Activated T-helper 2 cell treated with anti-CD3 and anti-CD28 coated beads, Interferon-gamma antibody, Interleukin-2, Interleukin-4, amounts not matched to agents 10 μg/mL and 5 μg/mL and 100 μg/mL, durations not matched to agents 14 hours and 24 hours and 36 hours (primary cell): ENCODE measurements at regions of chr11 and their contacts with region 1.

Region 1: DNA sequence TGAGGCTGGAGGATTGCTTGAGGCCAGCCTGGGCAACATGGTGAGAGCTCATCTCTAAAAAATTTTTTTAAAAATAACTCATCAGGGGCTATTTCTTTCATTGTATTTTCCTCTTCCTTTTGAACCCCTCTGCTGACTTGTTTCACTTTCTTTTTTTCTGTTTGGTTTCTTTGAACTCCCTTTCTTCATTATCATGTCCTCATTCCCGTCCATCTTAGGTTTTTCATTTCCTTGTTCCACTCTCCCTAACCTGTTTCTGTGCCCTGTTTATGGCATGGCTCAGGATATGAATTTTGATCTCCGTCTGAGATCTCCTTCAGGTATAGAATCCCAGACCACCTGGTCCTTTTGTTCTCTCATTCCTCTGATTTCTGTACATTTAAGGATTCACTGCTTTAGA is 12.5 kb downstream of the MARK2 start:
- DNase-seq: no peak
- H3K4me3 Mint-ChIP-seq: peak overlapping the region; percentile 60
- H3K27ac Mint-ChIP-seq: peak overlapping the region; percentile 58
- H3K4me1 Mint-ChIP-seq: peaks cover 44% of the 10 kb centered on the region
- H3K27me3 Mint-ChIP-seq: no peaks in the 10 kb centered on the region

Region 2: DNA sequence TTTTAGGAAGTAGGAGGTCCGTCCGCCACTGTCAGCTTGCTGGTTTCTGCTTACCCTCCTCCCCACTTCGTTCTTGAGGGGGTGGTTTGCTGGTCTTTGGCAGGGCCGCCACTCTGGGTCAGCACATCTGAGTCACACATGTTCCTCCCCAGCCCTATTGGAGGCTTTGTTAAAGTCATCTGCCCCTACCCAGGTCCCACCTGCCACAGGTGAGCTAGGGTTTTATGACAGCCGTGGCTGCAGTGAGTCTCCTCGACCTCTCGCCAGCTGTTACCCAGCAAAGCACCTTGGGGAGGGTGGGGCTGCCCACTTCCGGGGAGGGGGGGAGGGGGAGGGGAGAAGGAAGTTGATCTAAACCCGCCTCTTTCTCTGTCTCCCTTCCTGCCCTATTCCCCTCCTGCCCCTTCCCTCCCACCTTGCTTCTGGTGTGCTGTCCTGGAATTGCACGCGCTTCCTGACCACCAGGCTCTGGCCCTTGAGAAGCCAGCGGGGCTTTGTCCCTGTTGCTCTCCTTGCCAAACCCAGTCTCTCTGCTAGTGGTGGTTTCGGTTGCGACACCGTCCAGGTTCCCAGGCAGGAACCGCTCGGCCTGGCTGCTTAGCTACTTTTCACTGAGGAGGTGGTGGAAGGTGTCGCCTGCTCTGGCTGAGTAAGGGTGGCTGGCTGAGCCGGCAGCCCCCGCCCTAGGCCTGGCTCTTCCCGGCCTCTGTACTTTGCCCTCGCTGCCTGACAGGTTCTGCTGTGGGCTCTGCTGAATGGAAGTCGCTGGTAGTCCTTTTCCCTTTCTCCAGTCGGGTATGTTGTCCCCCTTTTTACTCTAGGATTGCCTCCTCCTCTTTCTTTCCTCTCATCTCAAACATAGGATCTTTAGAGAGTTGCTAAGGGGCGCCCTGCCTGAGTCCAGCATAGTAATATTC is 37.1 kb after region 1 on chr11:
- intact Hi-C with region 1: loop called (anchors 5 kb)
- DNase-seq: peak; percentile 58
- H3K4me3 Mint-ChIP-seq: peak overlapping the region; percentile 91
- H3K27ac Mint-ChIP-seq: peak overlapping the region; percentile 85
- H3K4me1 Mint-ChIP-seq: peaks cover 69% of the 10 kb centered on the region
- H3K27me3 Mint-ChIP-seq: no peaks in the 10 kb centered on the region